Gastrocnemius medialis (tissue), 4 donors: ENCODE measurements at regions of chr19 and their contacts with region 1.

Region 1: DNA sequence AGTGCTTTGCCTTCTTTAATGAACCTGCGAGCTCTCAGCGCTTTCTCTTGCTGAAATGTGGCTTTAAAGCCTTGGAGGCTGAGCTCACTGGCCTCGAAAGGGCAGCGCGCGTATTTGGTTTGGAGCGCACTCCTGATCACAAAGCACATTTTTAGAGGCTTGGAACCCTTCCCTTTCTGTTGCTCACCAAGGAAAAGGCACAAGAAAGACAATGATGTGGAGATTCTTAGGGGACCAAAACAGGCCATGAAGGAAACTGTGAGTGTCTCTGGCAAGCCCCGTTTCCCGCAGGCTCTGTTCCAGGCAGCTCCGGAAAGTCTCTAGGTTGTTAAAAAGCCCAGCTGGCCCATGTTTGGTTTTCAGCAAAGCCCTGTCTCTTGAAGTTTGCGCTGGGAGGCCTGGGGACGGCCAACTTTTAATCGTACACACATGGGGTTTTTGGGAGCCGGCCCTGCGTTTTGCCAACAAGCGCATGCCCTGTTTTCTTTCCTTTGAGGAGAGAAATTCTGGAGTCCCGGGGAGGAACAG is 9.4 kb upstream of the SPC24 start:
- DNase-seq: peak; percentile 44 to 75
- ATAC-seq: peak; percentile 71 to 79
- H3K4me3 ChIP-seq: peak overlapping the region in 1 of 4 donors; percentile 27
- H3K27ac ChIP-seq: peak overlapping the region; percentile 70 to 81 (median 76)
- H3K4me1 ChIP-seq: peaks cover 12 to 18% of the 10 kb centered on the region in 2 donors
- H3K27me3 ChIP-seq: no peaks in the 10 kb centered on the region
- CTCF ChIP-seq: no peak
- POLR2A ChIP-seq: no peak

Region 2: GRCh38 chr19:11035441-11036377 is 129.2 kb before region 1 on chr19:
- in situ Hi-C with region 1: no loop called
- intact Hi-C with region 1: no loop called
- DNase-seq: peak; percentile 78 to 92
- ATAC-seq: peak; percentile 85 to 92
- H3K4me3 ChIP-seq: no peak overlapping the region
- H3K27ac ChIP-seq: peak overlapping the region; percentile 64 to 73 (median 72)
- H3K4me1 ChIP-seq: peaks cover 11 to 15% of the 10 kb centered on the region in 2 donors
- H3K27me3 ChIP-seq: no peaks in the 10 kb centered on the region
- CTCF ChIP-seq: peak; percentile 63 to 83 (median 82)
- POLR2A ChIP-seq: no peak

Region 3: DNA sequence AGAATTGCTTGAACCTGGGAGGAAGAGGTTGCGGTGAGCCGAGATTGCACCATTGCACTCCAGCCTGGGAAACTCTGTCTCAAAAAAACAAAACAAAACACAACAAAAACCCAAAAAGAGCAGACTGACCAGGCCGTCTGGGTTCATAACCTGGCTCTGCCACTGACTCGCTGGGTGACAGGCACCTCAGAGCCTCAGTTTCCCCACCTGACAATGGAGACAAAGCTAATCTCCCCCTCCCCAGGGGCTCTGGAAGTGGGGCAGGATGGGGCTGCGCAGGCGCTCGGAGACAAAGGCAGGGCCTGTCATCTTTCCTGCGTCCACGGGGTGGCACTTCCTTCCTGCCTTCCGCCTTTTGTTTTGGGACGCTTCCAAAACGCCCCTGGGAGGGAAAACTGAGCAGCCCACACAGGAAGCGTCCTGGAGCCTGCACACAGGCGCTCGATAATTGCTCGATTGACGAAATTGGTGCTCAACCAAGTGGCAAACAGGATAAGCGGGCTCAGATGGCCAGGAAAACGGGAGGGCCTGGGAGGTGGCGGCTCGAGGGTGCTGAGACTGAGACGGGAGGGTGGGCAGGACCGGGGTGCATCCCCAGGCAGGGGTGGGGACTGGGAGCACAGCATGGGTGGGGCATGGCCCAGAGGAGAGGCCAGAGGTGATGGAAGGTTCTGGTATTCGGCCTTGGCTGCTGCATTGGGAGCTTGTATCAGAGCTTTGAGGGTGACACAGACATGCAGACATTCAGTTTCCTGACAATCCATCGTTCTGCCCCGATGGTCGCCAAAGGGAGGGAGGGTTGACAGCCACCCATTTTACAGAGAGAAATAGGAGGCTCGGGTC is 27.2 kb before region 1 on chr19:
- in situ Hi-C with region 1: no loop called
- intact Hi-C with region 1: no loop called
- DNase-seq: peak; percentile 60 to 72
- ATAC-seq: peak; percentile 57
- H3K4me3 ChIP-seq: peak overlapping the region; percentile 29 to 53 (median 46)
- H3K27ac ChIP-seq: peak overlapping the region; percentile 72 to 84 (median 79)
- H3K4me1 ChIP-seq: peaks cover 21 to 39% of the 10 kb centered on the region in 2 donors
- H3K27me3 ChIP-seq: no peaks in the 10 kb centered on the region
- CTCF ChIP-seq: peak; percentile 87 to 93 (median 89)
- POLR2A ChIP-seq: no peak

Region 4: DNA sequence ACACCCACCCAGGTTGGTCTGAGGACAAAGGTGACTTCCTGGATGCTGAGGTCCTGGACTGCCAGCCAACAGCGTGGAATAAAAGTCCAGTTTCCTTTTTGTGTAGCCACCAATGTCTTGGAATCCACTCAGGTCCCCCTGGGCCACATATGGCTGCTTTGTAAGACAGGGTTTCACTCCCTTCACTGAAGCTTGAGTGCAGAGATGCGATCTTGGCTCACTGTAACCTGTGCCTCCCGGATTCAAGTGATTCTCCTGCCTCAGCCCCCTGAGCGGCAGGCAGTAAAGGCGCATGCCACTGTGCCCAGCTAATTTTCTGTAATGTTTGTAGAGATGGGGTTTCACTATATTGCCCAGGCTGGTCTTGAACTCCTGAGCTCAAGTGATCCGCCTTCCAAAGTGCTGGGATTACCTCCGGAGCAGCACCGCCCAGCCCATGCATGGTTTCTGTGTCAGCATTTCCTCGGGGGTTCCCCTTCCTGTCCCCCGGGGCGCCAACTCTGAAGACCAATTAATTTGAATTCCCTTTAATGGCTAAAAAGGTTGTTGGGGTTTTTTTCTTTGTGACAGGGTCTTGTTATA is 14.9 kb after region 1 on chr19:
- in situ Hi-C with region 1: no loop called
- intact Hi-C with region 1: loop called (anchors 2 kb)
- DNase-seq: no peak
- ATAC-seq: no peak
- H3K4me3 ChIP-seq: no peak overlapping the region
- H3K27ac ChIP-seq: peak overlapping the region; percentile 43 to 56 (median 51)
- H3K4me1 ChIP-seq: peaks cover 7 to 15% of the 10 kb centered on the region in 2 donors
- H3K27me3 ChIP-seq: no peaks in the 10 kb centered on the region
- CTCF ChIP-seq: no peak
- POLR2A ChIP-seq: no peak